ENCODE measurements at regions of chr10 and their contacts with region 1.

Region 1: DNA sequence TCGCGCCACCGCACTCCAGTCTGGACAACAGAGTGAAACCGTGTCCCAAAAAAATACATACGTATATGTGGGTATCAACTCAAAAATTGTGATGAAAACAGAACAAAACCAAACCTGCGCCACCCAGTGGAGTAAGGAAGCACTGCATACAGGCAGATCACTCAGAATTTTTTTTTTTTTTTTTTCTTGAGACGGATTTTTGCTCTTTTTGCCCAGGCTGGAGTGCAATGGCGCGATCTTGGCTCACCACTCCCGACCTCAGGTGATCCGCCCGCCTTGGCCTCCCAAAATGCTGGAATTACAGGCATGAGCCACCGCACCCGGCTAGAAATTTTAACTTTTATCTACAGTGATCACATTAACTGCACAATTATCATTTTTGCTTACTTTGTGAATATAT is 9.1 kb upstream of the TMEM236 start:
- DNase-seq: no peak
- ATAC-seq: no peak
- H3K4me3 ChIP-seq: no peak overlapping the region
- H3K27ac ChIP-seq: no peak overlapping the region
- H3K4me1 ChIP-seq: peaks cover 13 to 19% of the 10 kb centered on the region in 2 donors
- H3K27me3 ChIP-seq: no peaks in the 10 kb centered on the region
- CTCF ChIP-seq: peak; percentile 80 to 89 (median 81)
- POLR2A ChIP-seq: no peak

Region 2: DNA sequence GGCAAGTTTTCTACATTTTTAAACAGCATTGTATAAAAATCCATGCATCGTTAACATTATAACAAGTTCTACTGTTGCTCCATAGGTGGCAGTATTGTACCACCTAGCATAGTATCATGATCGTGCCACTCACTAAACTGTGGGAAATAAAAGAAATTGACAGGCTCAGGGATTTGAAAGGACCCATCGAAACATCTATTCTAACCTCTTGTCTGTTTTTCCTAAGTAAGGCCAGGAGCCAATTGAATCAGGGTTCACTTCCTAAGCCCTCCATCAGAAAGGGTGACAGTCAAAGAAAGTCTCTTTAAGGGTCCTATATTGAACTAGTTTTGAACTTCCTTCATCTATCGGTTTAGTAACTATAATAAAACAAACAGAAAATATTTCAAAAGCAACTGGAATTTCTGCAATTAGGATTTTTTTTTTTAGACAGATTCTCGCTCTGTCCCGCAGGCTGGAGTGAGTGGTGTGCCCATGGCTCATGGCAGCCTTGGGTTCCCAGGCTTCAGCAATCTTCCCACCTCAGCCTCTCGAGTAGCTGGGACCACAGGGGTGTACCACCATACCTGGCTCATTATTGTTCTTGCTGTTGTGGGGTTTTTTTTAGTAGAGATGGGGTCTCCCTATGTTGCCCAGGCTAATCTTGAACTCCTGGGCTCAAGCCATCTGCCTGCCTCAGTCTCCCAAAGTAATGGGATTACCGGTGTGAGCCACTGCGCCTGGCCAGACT is 135.2 kb before region 1 on chr10:
- in situ Hi-C with region 1: loop called (anchors 5 kb)
- intact Hi-C with region 1: loop called (anchors 1 kb)
- DNase-seq: no peak
- ATAC-seq: peak; percentile 91 to 92
- H3K4me3 ChIP-seq: no peak overlapping the region
- H3K27ac ChIP-seq: no peak overlapping the region
- H3K4me1 ChIP-seq: no peaks in the 10 kb centered on the region
- H3K27me3 ChIP-seq: no peaks in the 10 kb centered on the region
- CTCF ChIP-seq: peak; percentile 64 to 94 (median 90)
- POLR2A ChIP-seq: no peak

Region 3: GRCh38 chr10:17910125-17910789 is 167.3 kb after region 1 on chr10:
- in situ Hi-C with region 1: no loop called
- intact Hi-C with region 1: no loop called
- DNase-seq: no peak
- ATAC-seq: no peak
- H3K4me3 ChIP-seq: no peak overlapping the region
- H3K27ac ChIP-seq: no peak overlapping the region
- H3K4me1 ChIP-seq: no peaks in the 10 kb centered on the region
- H3K27me3 ChIP-seq: no peaks in the 10 kb centered on the region
- CTCF ChIP-seq: peak in 2 of 5 experiments; percentile 36 to 44
- POLR2A ChIP-seq: no peak

Region 4: DNA sequence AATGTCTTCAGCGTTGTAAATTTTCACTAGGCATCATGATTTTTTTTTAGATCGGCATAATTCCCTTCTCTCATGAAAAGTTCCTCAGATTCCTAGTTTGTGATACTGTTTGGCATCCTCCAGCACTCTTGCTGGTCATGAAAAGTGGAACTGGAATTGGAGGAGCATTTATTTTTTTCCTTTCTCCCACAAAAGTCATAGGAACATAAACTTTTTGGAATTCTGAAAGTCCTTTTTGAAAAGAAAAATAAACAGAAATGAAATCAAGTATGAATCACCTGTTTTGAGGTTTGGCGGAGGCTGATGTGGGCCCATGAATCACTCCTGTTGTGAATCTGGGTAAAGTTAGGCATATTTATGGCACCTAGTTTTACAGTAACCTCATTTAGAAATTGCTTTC is 415.0 kb after region 1 on chr10:
- in situ Hi-C with region 1: no loop called
- intact Hi-C with region 1: no loop called
- DNase-seq: no peak
- ATAC-seq: no peak
- H3K4me3 ChIP-seq: no peak overlapping the region
- H3K27ac ChIP-seq: no peak overlapping the region
- H3K4me1 ChIP-seq: peaks cover 5 to 7% of the 10 kb centered on the region in 2 donors
- H3K27me3 ChIP-seq: no peaks in the 10 kb centered on the region
- CTCF ChIP-seq: no peak
- POLR2A ChIP-seq: no peak